ENCODE measurements at regions of chr16 and their contacts with region 1.

Region 1: DNA sequence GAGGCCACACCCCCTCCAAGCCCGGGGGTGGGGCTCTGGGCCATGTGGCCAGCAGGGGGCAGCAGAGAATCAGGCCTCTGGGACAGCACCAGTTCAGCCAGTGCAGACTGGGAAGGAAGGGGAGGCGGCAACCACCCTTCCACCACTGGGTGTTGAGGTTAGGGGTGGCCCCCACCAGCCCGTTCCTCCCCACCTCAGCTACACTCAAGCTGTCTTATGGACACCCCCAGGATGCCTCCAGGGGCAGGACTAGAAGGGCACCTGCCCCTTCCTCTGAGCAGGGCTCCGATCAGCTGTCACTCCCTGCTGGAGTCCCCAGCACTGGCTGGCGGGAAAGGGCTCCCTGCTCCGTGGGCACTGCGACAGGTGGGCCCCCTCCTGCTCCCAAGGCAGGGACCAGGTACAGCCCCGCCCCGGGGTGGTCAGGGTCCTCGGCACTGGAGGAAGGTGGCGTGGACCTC is 21.8 kb downstream of the KATNB1 start:
- DNase-seq: peak; percentile 79
- H3K4me3 Mint-ChIP-seq: no peak overlapping the region
- H3K27ac Mint-ChIP-seq: no peak overlapping the region
- H3K4me1 Mint-ChIP-seq: peaks cover 6% of the 10 kb centered on the region
- H3K27me3 Mint-ChIP-seq: no peaks in the 10 kb centered on the region

Region 2: GRCh38 chr16:57734925-57735754 is 22.2 kb before region 1 on chr16:
- intact Hi-C with region 1: no loop called
- DNase-seq: peak; percentile 98
- H3K4me3 Mint-ChIP-seq: peak overlapping the region; percentile 97
- H3K27ac Mint-ChIP-seq: peak overlapping the region; percentile 96
- H3K4me1 Mint-ChIP-seq: peaks cover 15% of the 10 kb centered on the region
- H3K27me3 Mint-ChIP-seq: no peaks in the 10 kb centered on the region

Region 3: GRCh38 chr16:57826706-57827625 is 69.6 kb after region 1 on chr16:
- intact Hi-C with region 1: no loop called
- DNase-seq: no peak
- H3K4me3 Mint-ChIP-seq: no peak overlapping the region
- H3K27ac Mint-ChIP-seq: no peak overlapping the region
- H3K4me1 Mint-ChIP-seq: no peaks in the 10 kb centered on the region
- H3K27me3 Mint-ChIP-seq: peaks cover 12% of the 10 kb centered on the region

Region 4: DNA sequence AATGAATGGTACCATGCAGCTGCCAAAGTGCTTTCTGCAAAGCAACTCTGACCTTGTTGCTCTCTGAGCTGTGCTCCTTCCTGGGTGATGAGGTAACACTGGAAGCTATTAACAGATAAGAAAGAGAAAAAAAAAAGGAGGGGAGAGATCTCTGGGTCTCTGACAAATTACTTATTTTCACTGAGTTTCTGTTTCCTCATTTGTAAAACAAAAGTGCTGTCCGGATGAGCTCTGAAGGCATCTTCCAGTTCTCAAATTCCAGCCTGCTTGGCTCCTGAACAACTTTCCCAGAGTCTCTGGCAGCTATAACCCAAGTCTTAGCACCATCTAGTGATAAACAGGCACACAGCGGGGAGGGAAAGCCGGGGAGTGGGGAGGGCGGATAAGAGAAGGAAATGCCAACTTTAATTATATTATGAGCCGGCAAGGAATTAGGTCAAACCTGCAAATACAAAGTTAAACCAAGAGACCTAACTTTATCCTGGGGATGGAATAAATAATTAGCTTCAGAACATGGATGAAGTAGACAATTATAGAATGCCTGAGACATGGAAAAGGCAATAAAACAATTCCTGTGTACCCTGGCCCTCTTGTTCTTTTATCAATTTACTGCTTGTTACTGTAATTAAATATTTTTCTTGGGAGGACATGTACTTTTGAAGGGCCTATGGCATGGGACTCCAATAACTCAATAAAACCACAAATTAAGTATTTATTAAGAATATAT is 106.2 kb after region 1 on chr16:
- intact Hi-C with region 1: loop called (anchors 2 kb)
- DNase-seq: no peak
- H3K4me3 Mint-ChIP-seq: no peak overlapping the region
- H3K27ac Mint-ChIP-seq: no peak overlapping the region
- H3K4me1 Mint-ChIP-seq: no peaks in the 10 kb centered on the region
- H3K27me3 Mint-ChIP-seq: peaks cover 12% of the 10 kb centered on the region

Region 5: DNA sequence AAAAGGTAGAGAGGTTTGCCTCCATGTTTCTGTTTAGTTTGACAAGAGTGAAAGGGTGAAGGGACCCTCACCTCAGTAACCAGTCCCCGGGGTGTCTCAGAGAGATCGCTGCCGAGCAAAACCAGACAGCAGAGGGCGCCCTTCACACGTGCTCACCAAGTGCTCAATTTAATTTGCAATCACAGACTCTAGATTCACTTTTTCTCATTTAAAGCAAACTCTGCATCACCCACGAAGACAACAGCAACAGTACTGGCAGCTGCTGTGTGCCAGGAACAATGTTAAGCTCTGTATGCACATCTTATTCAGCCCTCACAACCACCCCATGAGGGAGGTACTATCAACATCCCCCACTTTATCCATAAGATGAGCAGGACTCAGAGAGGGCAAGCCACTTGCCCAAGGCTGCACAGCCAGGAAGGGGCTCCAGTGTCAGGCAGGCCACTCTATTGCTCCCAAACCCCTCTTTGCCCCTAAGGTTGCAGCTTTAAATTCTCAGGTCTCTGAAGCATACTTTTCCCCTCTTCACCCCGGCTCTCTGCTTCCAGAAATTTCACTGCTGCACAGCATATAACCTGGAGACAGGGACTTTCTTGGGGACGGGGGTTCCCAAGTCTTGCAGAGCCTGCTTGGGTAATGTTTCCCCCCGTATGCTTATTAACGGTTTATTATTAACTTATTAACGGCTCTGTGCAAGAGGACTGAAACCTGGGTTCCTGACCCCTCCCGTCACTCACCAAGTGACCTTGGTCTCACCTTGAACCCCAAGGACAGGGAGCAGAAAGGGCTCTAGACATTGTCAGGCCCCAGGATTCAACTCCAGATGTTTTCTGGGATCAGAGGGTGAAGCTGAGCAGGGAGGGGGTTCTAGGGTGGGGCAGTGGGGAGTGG is 142.7 kb after region 1 on chr16:
- intact Hi-C with region 1: loop called (anchors 5 kb)
- DNase-seq: peak; percentile 64
- H3K4me3 Mint-ChIP-seq: no peak overlapping the region
- H3K27ac Mint-ChIP-seq: no peak overlapping the region
- H3K4me1 Mint-ChIP-seq: no peaks in the 10 kb centered on the region
- H3K27me3 Mint-ChIP-seq: peaks cover 7% of the 10 kb centered on the region

Measured in activated T-helper 2 cell treated with anti-CD3 and anti-CD28 coated beads, Interferon-gamma antibody, Interleukin-2, Interleukin-4, amounts not matched to agents 10 μg/mL and 5 μg/mL and 100 μg/mL, durations not matched to agents 14 hours and 24 hours and 36 hours (primary cell).